PC-3 (cell line): ENCODE measurements at regions of chr19 and their contacts with region 1.

Region 1: DNA sequence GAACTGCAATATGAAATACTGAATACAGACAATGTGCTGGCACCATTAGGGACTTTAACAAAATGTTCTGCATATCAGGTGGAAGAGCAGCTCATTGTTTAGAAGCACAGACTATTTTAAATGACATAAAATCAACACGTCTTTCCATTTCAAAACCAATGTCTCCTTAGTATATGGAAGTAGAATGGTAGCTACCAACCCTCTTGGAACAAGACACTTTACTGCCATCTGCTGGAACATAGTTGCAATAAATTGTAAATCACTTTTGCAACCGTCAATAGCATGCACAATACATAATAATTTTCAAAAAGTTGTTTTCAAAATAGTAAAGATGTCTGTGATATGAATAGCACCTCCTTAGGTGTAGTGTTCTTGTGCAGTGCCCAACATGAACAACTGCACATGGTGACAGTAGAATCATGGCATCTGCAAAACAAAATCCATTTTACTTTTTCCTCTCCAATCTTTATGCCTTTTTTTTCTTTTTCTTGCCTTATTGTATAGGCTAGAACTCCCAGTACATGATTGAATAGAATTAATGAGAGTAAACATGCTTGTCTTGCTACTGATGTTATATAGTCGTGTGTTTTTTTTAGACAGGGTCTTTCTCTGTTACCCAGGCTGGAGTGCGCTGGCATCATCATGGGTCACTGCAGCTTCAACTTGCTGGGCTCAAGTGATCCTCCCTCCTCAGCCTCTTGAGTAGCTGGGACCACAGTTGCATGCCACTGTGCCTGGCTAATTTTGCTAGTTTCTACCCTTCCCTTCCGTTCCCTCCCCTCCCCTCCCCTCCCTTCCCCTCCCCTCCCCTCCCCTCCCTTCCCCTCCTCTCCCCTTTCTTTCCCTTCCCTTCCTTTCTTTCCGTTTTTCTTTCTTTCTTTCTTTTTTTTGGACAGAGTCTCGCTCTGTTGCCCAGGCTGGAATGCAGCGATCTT is 7.8 kb upstream of the LYPD5 start:
- DNase-seq: peak; percentile 75
- ATAC-seq: peak; percentile 70
- H3K4me3 ChIP-seq: no peak overlapping the region
- H3K27ac ChIP-seq: no peak overlapping the region
- H3K4me1 ChIP-seq: no peaks in the 10 kb centered on the region; the same call in 1 of the 2 replicates
- H3K27me3 ChIP-seq: no peaks in the 10 kb centered on the region
- CTCF ChIP-seq: peak; percentile 68

Region 2: GRCh38 chr19:43618921-43619261 is 191.1 kb before region 1 on chr19:
- CTCF ChIA-PET with region 1: interaction called, 11 read pairs
- POLR2A ChIA-PET with region 1: no interaction called
- intact Hi-C with region 1: no loop called
- DNase-seq: peak; percentile 12
- ATAC-seq: peak; percentile 10
- H3K4me3 ChIP-seq: peak overlapping the region; percentile 78
- H3K27ac ChIP-seq: peak overlapping the region; percentile 33; the same call in 1 of the 2 replicates
- H3K4me1 ChIP-seq: peaks cover 13% of the 10 kb centered on the region
- H3K27me3 ChIP-seq: no peaks in the 10 kb centered on the region
- CTCF ChIP-seq: no peak